ENCODE measurements at regions of chr1 and their contacts with region 1.

Region 1: GRCh38 chr1:31644560-31645273 is at the start of gene PEF1:
- DNase-seq: peak; percentile 99 to 100 (median 100)
- H3K4me3 ChIP-seq: peak within 1 kb of the TSS; percentile 91
- H3K27ac ChIP-seq: peak within 1 kb of the TSS; percentile 91 to 93
- H3K4me1 ChIP-seq: peaks cover 7% of the 10 kb centered on the region
- H3K27me3 ChIP-seq: no peaks in the 10 kb centered on the region
- CTCF ChIP-seq: peak in 1 of 3 donors; percentile 28
- EP300 ChIP-seq: peak; percentile 34
- POLR2A ChIP-seq: peak; percentile 96
- total RNA-seq, gene PEF1: 31.7 to 65.2 (median 59.9) TPM

Region 2: DNA sequence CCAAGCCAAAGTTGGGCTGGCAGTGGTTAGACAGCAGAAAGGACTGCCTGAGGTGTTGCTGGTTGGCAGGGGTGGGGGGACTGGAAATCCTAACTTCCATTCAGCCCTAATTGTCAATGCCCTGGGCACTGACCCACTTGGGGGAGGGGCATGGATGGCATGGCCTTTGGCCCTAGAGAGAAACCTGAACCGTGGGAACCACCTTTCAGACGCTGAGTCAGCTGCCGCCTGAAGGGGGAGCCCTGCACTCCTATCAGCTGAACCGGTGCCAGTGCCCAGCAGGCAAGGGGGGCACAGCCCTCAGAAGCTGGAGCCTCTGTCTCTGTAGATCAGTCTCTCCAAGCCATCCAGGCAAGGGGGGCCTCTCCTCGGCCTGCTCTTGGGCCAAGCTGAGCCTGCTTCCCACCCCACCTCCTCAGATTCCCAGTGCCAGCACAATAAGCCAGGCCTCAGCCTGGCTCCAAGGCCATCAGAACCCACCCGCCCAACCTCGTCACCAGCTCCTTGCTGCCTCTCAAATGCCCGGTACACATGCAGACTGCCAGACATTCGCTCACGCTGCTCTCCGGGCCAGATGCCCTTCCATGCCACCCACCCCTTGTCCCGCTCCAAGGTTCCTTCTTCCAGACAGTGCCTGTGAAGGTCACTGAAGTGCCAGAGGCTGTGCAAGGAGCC is 56.9 kb before region 1 on chr1:
- intact Hi-C with region 1: loop called in 1 of 4 experiments (anchors 10 kb)
- DNase-seq: peak; percentile 53 to 74 (median 66)
- H3K4me3 ChIP-seq: no peak overlapping the region
- H3K27ac ChIP-seq: peak overlapping the region; percentile 62 to 66
- H3K4me1 ChIP-seq: peaks cover 35% of the 10 kb centered on the region
- H3K27me3 ChIP-seq: no peaks in the 10 kb centered on the region
- CTCF ChIP-seq: peak in 2 of 3 donors; percentile 28 to 41
- EP300 ChIP-seq: no peak
- POLR2A ChIP-seq: no peak

Region 3: GRCh38 chr1:32142446-32143301 is 498.0 kb after region 1 on chr1:
- intact Hi-C with region 1: no loop called
- DNase-seq: peak in 2 of 5 donors; percentile 19 to 49
- H3K4me3 ChIP-seq: no peak overlapping the region
- H3K27ac ChIP-seq: no peak overlapping the region
- H3K4me1 ChIP-seq: peaks cover 2% of the 10 kb centered on the region
- H3K27me3 ChIP-seq: no peaks in the 10 kb centered on the region
- CTCF ChIP-seq: no peak
- EP300 ChIP-seq: no peak
- POLR2A ChIP-seq: no peak